ENCODE measurements at regions of chr17 and their contacts with region 1.

Region 1: GRCh38 chr17:44141717-44142285 is at the start of gene HROB:
- DNase-seq: peak; percentile 95 to 97
- ATAC-seq: peak; percentile 88 to 94 (median 91)
- H3K4me3 ChIP-seq: peak within 1 kb of the TSS; percentile 83
- H3K27ac ChIP-seq: peak within 1 kb of the TSS; percentile 27
- H3K4me1 ChIP-seq: peaks cover 14% of the 10 kb centered on the region
- H3K27me3 ChIP-seq: peaks cover 0 to 3% (median 2%) of the 10 kb centered on the region in 3 donors
- CTCF ChIP-seq: peak; percentile 88
- total RNA-seq, gene HROB: 0.25 to 1.1 (median 0.39) TPM

Region 2: GRCh38 chr17:44066204-44066930 is 75.4 kb before region 1 on chr17 and contains the start of gene LSM12:
- intact Hi-C with region 1: no loop called
- DNase-seq: peak; percentile 90 to 94
- ATAC-seq: peak; percentile 80 to 82 (median 80)
- H3K4me3 ChIP-seq: peak within 1 kb of the TSS; percentile 79
- H3K27ac ChIP-seq: peak within 1 kb of the TSS; percentile 90
- H3K4me1 ChIP-seq: peaks cover 33% of the 10 kb centered on the region
- H3K27me3 ChIP-seq: no peaks in the 10 kb centered on the region
- CTCF ChIP-seq: no peak
- total RNA-seq, gene LSM12: 39.6 to 65.9 (median 52.9) TPM

Region 3: GRCh38 chr17:44170499-44171201 is 28.8 kb after region 1 on chr17 and contains the start of gene ASB16:
- intact Hi-C with region 1: loop called in 1 of 2 experiments (anchors 2 kb)
- DNase-seq: peak; percentile 63 to 89
- ATAC-seq: peak; percentile 90 to 93 (median 92)
- H3K4me3 ChIP-seq: peak within 1 kb of the TSS; percentile 77
- H3K27ac ChIP-seq: peak within 1 kb of the TSS; percentile 100
- H3K4me1 ChIP-seq: peaks cover 41% of the 10 kb centered on the region
- H3K27me3 ChIP-seq: no peaks in the 10 kb centered on the region
- CTCF ChIP-seq: no peak
- total RNA-seq, gene ASB16: 17.0 to 43.4 (median 26.1) TPM

Region 4: DNA sequence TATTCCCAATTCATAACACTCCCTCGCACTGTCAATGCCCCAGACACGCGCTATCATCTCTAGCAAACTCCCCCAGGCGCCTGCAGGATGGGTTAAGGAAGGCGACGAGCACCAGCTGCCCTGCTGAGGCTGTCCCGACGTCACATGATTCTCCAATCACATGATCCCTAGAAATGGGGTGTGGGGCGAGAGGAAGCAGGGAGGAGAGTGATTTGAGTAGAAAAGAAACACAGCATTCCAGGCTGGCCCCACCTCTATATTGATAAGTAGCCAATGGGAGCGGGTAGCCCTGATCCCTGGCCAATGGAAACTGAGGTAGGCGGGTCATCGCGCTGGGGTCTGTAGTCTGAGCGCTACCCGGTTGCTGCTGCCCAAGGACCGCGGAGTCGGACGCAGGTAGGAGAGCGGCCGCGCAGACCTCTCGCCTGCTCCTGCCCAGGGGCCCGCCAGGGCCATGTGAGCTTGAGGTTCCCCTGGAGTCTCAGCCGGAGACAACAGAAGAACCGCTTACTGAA is 203.2 kb after region 1 on chr17 and contains the start of gene GRN:
- intact Hi-C with region 1: loop called in 1 of 2 experiments (anchors 5 kb)
- DNase-seq: peak; percentile 89 to 93
- ATAC-seq: peak; percentile 97 to 99 (median 98)
- H3K4me3 ChIP-seq: peak within 1 kb of the TSS; percentile 84
- H3K27ac ChIP-seq: peak within 1 kb of the TSS; percentile 86
- H3K4me1 ChIP-seq: peaks cover 5% of the 10 kb centered on the region
- H3K27me3 ChIP-seq: no peaks in the 10 kb centered on the region
- CTCF ChIP-seq: no peak
- total RNA-seq, gene GRN: 37.2 to 61.0 (median 58.6) TPM

Region 5: DNA sequence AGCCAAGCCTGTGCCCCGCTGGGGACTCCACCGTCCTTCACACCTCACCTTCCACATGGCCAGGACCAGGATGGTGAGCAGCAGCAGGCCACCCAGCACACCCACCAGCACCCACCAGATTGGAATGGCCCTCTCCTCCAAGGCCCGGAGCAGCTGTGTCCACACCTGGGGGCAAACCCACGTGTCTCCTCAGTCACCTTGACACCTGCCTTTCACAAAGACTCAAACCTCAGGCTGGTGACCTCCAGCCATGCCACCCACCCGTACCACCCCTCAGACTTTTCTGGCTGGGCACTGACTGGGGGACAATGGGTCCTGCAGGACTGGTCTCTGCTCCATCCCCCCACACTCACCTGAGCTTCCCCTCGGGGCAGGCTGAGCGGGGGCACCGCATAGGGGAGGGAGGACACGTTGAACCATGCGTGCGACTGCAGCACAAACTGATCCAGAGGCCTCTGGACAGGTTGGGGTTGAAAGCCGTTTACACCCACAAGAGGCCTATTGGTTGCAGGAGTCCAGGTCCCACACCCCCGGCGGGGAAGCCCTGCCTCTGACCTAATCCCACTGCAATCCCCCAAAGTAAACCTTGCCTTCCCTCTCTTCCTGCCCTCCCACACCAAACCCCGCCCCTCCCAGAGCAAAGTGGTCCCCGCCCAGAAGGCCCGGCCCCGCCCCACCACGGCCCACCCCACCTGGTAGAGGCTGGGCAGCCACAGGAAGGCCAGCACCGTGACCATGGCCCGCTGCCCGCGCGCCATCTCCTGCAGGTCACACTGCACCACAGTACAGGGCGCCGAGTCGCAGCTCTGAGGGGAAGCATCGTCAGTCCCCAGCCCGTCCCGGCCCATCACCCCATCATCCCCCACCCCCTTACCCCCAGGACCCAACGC is 232.8 kb after region 1 on chr17:
- intact Hi-C with region 1: no loop called
- DNase-seq: no peak
- ATAC-seq: no peak
- H3K4me3 ChIP-seq: no peak overlapping the region
- H3K27ac ChIP-seq: no peak overlapping the region
- H3K4me1 ChIP-seq: no peaks in the 10 kb centered on the region
- H3K27me3 ChIP-seq: peaks cover 0 to 52% (median 20%) of the 10 kb centered on the region in 3 donors
- CTCF ChIP-seq: no peak